CD8-positive, alpha-beta T cell (primary cell): ENCODE measurements at regions of chr11 and their contacts with region 1.

Region 1: DNA sequence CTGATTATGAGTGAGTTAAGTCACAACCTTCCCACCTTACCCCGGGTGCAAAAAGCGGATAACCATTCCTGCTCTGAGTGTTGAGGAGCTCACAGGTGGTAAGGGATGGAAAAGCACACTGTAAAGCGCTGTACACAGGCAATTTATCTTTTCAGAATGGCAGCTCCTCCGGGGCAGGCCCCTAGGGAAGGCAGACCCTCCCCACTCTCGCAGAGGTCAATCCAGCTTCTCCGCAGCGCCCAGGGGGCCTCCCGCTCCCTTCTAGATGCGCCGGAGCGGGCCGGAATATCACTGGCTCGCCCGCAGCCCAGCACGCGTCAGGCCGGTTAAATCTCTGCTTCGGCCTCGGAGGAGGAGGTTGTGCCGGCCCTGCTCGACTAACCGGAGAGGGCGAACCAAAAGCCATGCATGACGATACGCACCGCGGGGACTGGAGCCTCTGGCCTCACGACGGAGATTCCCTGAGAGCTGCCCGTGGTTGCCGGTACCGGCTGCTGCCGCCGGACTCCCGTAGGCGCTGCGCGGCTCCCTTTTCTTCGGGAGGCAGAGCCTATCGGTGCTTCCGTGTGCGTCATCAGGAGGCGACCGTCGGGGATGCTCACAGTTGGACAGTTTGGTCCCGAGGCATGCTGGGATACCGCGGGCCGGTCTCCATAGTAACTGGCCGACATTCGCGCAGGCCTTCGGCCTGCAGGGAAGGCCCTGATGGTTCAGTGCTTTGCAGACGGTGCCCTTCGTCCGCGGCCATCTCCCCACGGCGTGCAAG is at the start of gene BRMS1:
- DNase-seq: peak; percentile 89 to 98 (median 97)
- ATAC-seq: peak; percentile 81
- H3K4me3 ChIP-seq: peak within 1 kb of the TSS; percentile 79
- H3K4me3 Mint-ChIP-seq: peak within 1 kb of the TSS; percentile 96
- H3K27ac ChIP-seq: peak within 1 kb of the TSS; percentile 75 to 87
- H3K27ac Mint-ChIP-seq: peak within 1 kb of the TSS; percentile 94
- H3K4me1 ChIP-seq: peaks cover 36% of the 10 kb centered on the region
- H3K4me1 Mint-ChIP-seq: peaks cover 54% of the 10 kb centered on the region
- H3K27me3 ChIP-seq: no peaks in the 10 kb centered on the region
- H3K27me3 Mint-ChIP-seq: peaks cover 2% of the 10 kb centered on the region
- CTCF ChIP-seq: no peak
- total RNA-seq, gene BRMS1: 66.7 to 68.0 TPM

Region 2: GRCh38 chr11:65477149-65477965 is 867.4 kb before region 1 on chr11:
- CTCF ChIA-PET with region 1: no interaction called
- POLR2A ChIA-PET with region 1: no interaction called
- intact Hi-C with region 1: no loop called
- DNase-seq: peak; percentile 71 to 94 (median 91)
- ATAC-seq: peak; percentile 78
- H3K4me3 ChIP-seq: peak overlapping the region; percentile 89 to 92
- H3K4me3 Mint-ChIP-seq: peak overlapping the region; percentile 100
- H3K27ac ChIP-seq: peak overlapping the region; percentile 89 to 98
- H3K27ac Mint-ChIP-seq: peak overlapping the region; percentile 100
- H3K4me1 ChIP-seq: peaks cover 12% of the 10 kb centered on the region
- H3K4me1 Mint-ChIP-seq: peaks cover 21% of the 10 kb centered on the region
- H3K27me3 ChIP-seq: no peaks in the 10 kb centered on the region
- H3K27me3 Mint-ChIP-seq: no peaks in the 10 kb centered on the region
- CTCF ChIP-seq: no peak

Region 3: DNA sequence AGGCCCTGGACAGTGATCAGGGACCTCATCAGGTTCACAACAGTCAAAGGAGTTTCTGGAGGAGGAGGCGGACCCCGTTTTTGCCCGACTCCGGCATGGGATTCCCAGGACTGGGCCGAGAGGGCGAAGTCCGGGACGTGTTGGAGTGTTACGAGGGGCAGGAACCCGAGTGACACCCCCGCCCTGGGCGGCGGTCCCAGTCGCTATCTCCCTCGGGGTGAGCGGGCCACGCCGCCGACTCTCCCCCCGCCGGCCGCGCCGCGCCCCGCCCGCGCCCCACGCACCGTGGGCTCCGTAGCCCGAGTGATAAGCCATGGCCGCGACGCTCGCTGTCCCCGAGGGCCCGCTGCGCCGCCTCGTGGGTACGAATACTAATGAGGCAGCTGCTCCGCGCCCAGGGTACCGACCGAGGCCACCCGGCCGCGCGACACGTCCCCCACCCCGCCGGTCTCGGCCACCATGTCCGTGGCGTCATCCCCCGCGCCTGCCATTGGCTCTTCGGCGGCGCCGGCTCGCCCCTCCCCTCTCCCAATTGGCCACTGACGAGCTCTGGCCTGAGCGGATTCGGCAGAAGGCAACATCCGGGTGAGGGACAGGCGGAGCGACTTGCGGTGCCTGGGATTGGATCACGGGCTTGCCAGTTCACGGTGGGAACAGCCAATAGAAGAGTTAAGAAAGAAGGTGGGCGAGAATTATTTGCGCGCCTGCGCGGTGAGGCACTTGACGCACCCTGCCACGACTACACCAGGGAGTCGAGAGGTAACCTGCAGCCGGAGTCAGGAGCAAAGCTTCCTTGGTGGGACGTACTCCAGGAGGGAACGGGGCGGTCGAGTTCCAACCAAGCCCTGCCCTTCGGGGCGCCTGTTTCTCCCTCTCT is 55.8 kb before region 1 on chr11 and contains the start of gene YIF1A:
- CTCF ChIA-PET with region 1: no interaction called
- POLR2A ChIA-PET with region 1: no interaction called
- intact Hi-C with region 1: loop called in 1 of 2 experiments (anchors 10 kb)
- DNase-seq: peak; percentile 96 to 99 (median 98)
- ATAC-seq: peak; percentile 90
- H3K4me3 ChIP-seq: peak within 1 kb of the TSS; percentile 67 to 80
- H3K4me3 Mint-ChIP-seq: peak within 1 kb of the TSS; percentile 82
- H3K27ac ChIP-seq: peak within 1 kb of the TSS; percentile 75 to 81
- H3K27ac Mint-ChIP-seq: peak within 1 kb of the TSS; percentile 85
- H3K4me1 ChIP-seq: peaks cover 27% of the 10 kb centered on the region
- H3K4me1 Mint-ChIP-seq: peaks cover 42% of the 10 kb centered on the region
- H3K27me3 ChIP-seq: peaks cover 16 to 17% of the 10 kb centered on the region in 2 experiments
- H3K27me3 Mint-ChIP-seq: peaks cover 13% of the 10 kb centered on the region
- CTCF ChIP-seq: no peak
- total RNA-seq, gene YIF1A: 16.8 to 17.1 TPM

Region 4: DNA sequence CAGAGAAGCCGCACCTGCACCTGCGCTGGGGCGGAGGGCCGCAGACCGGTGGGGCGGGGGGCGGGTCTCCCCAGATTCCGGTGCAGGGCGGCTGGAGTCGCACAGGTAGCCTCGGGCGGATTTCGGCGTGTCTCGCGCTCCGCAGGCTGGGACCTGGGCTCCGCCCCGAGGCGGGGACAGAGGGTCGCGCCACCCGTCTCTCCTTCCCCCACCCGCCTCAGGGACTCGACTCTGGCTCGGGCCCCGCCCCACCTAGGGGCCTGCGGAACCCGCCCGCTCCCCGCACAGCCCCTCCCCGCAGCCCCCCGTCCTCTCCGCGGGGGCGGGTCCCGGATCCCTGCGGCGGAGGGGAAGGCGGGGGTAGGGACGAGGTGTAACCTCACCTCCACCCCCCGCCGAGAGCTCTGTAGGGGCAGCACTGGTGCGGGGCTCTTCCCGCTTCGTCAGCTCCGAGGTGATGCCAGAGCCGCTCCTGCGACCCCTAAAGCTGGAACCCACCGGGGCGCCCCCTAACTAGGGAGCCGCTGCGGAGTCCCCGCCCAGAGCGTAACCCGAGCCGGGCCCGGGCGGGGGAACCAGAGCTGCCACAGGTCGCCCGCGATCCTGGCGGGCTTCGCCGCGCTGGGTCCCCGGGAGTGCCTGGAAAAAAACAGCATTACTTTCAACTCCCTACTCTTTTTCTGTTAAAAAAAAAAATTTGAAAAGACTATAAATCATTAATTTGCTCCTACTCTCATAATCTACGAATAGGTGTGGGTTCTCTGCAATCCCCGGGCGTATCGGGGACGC is 27.1 kb after region 1 on chr11 and contains the start of gene SLC29A2:
- CTCF ChIA-PET with region 1: interaction called, 5 read pairs
- POLR2A ChIA-PET with region 1: interaction called, 13 read pairs
- intact Hi-C with region 1: loop called (anchors 1 kb)
- DNase-seq: peak; percentile 49 to 89 (median 80)
- ATAC-seq: peak; percentile 86
- H3K4me3 ChIP-seq: peak within 1 kb of the TSS; percentile 71 to 77
- H3K4me3 Mint-ChIP-seq: peak within 1 kb of the TSS; percentile 87
- H3K27ac ChIP-seq: peak within 1 kb of the TSS; percentile 63 to 68
- H3K27ac Mint-ChIP-seq: peak within 1 kb of the TSS; percentile 88
- H3K4me1 ChIP-seq: peaks cover 10% of the 10 kb centered on the region
- H3K4me1 Mint-ChIP-seq: peaks cover 12% of the 10 kb centered on the region
- H3K27me3 ChIP-seq: no peaks in the 10 kb centered on the region
- H3K27me3 Mint-ChIP-seq: no peaks in the 10 kb centered on the region
- CTCF ChIP-seq: no peak
- total RNA-seq, gene SLC29A2: 5.6 to 6.0 TPM

Region 5: GRCh38 chr11:66438504-66439466 is 94.1 kb after region 1 on chr11 and contains the start of gene MRPL11:
- CTCF ChIA-PET with region 1: no interaction called
- POLR2A ChIA-PET with region 1: no interaction called
- intact Hi-C with region 1: loop called (anchors 2 kb)
- DNase-seq: peak; percentile 79 to 96 (median 90)
- ATAC-seq: peak; percentile 99
- H3K4me3 ChIP-seq: peak within 1 kb of the TSS; percentile 72 to 78
- H3K4me3 Mint-ChIP-seq: peak within 1 kb of the TSS; percentile 91
- H3K27ac ChIP-seq: peak within 1 kb of the TSS; percentile 66 to 85
- H3K27ac Mint-ChIP-seq: peak within 1 kb of the TSS; percentile 98
- H3K4me1 ChIP-seq: peaks cover 7% of the 10 kb centered on the region
- H3K4me1 Mint-ChIP-seq: peaks cover 10% of the 10 kb centered on the region
- H3K27me3 ChIP-seq: no peaks in the 10 kb centered on the region
- H3K27me3 Mint-ChIP-seq: peaks cover 2% of the 10 kb centered on the region
- CTCF ChIP-seq: peak; percentile 64
- total RNA-seq, gene MRPL11: 19.8 to 20.6 TPM

Region 6: GRCh38 chr11:67118801-67119584 is 774.3 kb after region 1 on chr11 and contains the start of gene KDM2A:
- CTCF ChIA-PET with region 1: no interaction called
- POLR2A ChIA-PET with region 1: no interaction called
- intact Hi-C with region 1: loop called in 1 of 2 experiments (anchors 5 kb)
- DNase-seq: peak; percentile 98 to 100 (median 99)
- ATAC-seq: peak; percentile 81
- H3K4me3 ChIP-seq: peak within 1 kb of the TSS; percentile 62 to 80
- H3K4me3 Mint-ChIP-seq: peak within 1 kb of the TSS; percentile 97
- H3K27ac ChIP-seq: peak within 1 kb of the TSS; percentile 78 to 92
- H3K27ac Mint-ChIP-seq: peak within 1 kb of the TSS; percentile 96
- H3K4me1 ChIP-seq: peaks cover 34% of the 10 kb centered on the region
- H3K4me1 Mint-ChIP-seq: peaks cover 40% of the 10 kb centered on the region
- H3K27me3 ChIP-seq: no peaks in the 10 kb centered on the region
- H3K27me3 Mint-ChIP-seq: no peaks in the 10 kb centered on the region
- CTCF ChIP-seq: no peak
- total RNA-seq, gene KDM2A: 412 to 431 TPM